Activated B cell treated with CpG ODN at 0.5 μM for 24 hours (primary cell): ENCODE measurements at regions of chr12 and their contacts with region 1.

Region 1: DNA sequence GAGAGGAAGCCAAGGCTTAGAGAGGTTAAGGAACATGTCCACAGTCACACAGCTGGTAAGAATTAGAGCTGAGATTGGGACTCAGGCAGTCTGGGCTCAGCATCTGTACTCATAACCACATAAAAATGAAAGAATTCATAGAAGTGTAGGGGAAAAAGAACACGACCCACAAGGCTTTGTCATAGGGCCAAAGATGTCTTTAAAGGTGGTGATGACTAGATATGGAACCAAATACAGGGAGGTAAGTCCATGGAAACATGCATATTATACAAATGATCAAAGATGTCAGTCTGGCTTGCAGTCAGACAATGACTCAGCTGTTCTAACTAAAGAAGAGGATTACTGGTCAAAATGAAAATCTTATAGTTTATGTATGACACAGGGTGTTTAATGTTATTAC is 7.2 kb upstream of the SSPN start:
- DNase-seq: no peak
- ATAC-seq: no peak
- H3K4me3 Mint-ChIP-seq: no peak overlapping the region
- H3K27ac Mint-ChIP-seq: no peak overlapping the region
- H3K4me1 Mint-ChIP-seq: peaks cover 22% of the 10 kb centered on the region
- H3K27me3 Mint-ChIP-seq: no peaks in the 10 kb centered on the region
- CTCF ChIP-seq: no peak

Region 2: GRCh38 chr12:26162905-26163304 is 25.2 kb before region 1 on chr12:
- CTCF ChIA-PET with region 1: interaction called, 4 read pairs
- POLR2A ChIA-PET with region 1: no interaction called
- intact Hi-C with region 1: loop called (anchors 2 kb)
- DNase-seq: no peak
- ATAC-seq: peak; percentile 74
- H3K4me3 Mint-ChIP-seq: no peak overlapping the region
- H3K27ac Mint-ChIP-seq: peak overlapping the region; percentile 67
- H3K4me1 Mint-ChIP-seq: peaks cover 61% of the 10 kb centered on the region
- H3K27me3 Mint-ChIP-seq: no peaks in the 10 kb centered on the region
- CTCF ChIP-seq: no peak

Region 3: GRCh38 chr12:26204612-26205289 is 16.6 kb after region 1 on chr12:
- CTCF ChIA-PET with region 1: no interaction called
- POLR2A ChIA-PET with region 1: no interaction called
- intact Hi-C with region 1: no loop called
- DNase-seq: no peak
- ATAC-seq: no peak
- H3K4me3 Mint-ChIP-seq: no peak overlapping the region
- H3K27ac Mint-ChIP-seq: no peak overlapping the region
- H3K4me1 Mint-ChIP-seq: peaks cover 2% of the 10 kb centered on the region
- H3K27me3 Mint-ChIP-seq: no peaks in the 10 kb centered on the region
- CTCF ChIP-seq: no peak

Region 4: GRCh38 chr12:26402648-26403047 is 214.5 kb after region 1 on chr12:
- CTCF ChIA-PET with region 1: no interaction called
- POLR2A ChIA-PET with region 1: no interaction called
- intact Hi-C with region 1: loop called (anchors 2 kb)
- DNase-seq: no peak
- ATAC-seq: peak; percentile 54
- H3K4me3 Mint-ChIP-seq: no peak overlapping the region
- H3K27ac Mint-ChIP-seq: no peak overlapping the region
- H3K4me1 Mint-ChIP-seq: no peaks in the 10 kb centered on the region
- H3K27me3 Mint-ChIP-seq: no peaks in the 10 kb centered on the region
- CTCF ChIP-seq: no peak

Region 5: DNA sequence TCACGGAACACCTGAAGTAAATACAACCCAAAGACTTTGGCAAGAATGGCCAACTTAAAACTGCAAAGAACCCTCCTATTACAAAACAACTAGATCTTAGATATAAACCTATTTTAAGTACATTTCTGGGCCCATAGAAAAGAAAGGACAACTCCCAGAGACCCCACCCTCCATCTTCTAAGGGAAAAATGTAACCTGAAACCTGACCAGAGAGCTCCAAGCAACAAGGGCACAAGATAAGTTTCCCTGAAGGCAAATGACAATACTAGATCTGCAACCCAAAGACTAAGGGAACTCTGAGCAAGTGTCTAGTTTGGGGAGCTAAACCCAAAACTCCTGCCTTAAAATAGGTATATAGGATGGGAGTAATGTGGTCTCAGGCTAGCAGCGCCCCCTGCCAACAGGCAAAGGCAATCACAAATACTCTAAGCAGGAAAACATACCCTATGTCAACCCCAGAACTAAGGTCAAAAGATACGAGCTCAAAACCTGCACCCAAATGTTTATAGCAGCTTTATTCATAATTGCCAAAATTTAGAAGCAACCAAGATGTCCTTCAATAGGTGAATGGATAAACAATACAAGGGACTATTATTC is 426.0 kb after region 1 on chr12:
- CTCF ChIA-PET with region 1: no interaction called
- POLR2A ChIA-PET with region 1: no interaction called
- intact Hi-C with region 1: loop called (anchors 5 kb)
- DNase-seq: no peak
- ATAC-seq: peak; percentile 45
- H3K4me3 Mint-ChIP-seq: no peak overlapping the region
- H3K27ac Mint-ChIP-seq: no peak overlapping the region
- H3K4me1 Mint-ChIP-seq: no peaks in the 10 kb centered on the region
- H3K27me3 Mint-ChIP-seq: no peaks in the 10 kb centered on the region
- CTCF ChIP-seq: no peak